ENCODE measurements at regions of chr6 and their contacts with region 1.

Region 1: GRCh38 chr6:154768280-154768679 is 35.1 kb downstream of the SCAF8 start:
- DNase-seq: no peak
- CTCF ChIP-seq: no peak

Region 2: DNA sequence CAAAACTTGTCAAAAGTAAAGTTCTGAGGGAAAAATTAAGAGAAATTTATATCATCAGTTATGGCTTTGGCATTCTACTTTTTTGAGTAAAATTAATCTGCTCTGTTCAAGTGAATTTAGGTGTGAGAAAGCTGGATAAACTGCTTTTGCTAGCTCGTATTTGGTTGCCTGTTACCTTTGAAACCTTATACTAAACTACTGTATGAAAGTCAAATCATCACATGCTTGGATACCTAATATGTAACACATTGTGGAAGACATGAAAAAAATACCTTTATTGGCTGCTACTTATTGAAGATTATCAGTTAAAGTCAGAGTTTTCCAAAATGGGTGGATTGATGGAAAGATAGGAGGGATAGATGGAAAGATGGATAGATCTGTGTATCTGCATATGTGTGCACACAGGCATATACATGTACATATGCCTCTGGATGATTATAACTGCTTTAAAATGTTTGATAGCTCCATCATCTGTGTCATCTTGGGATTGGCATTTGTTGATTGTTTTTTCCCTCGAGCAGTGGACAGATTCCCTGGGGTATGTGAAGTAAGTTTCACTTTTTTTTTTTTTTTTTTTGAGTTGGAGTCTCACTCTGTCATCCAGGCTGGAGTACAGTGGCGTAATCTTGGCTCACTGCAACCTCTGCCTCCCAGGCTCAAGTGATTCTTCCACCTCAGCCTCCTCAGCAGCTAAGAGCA is 10.8 kb before region 1 on chr6:
- CTCF ChIA-PET with region 1: interaction called, 11 read pairs
- POLR2A ChIA-PET with region 1: no interaction called
- DNase-seq: no peak
- CTCF ChIP-seq: no peak

Region 3: DNA sequence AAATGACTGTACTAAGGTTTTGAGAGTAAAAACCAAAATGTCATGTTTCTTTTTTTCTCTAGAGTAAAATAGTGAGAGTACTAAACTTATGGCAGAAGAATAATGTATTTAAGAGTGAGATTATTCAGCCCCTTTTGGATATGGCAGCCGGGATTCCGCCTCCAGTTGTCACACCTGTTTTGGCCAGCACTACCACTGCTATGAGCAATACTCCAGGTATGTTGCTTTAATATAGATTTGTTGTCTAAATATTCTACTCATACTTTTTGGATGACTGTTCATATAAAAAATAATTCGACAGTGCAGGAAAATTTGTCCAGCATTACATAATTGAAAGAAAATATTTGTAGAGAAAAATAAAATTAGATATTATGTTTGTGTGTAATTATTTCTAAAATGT is 24.5 kb after region 1 on chr6:
- CTCF ChIA-PET with region 1: no interaction called
- POLR2A ChIA-PET with region 1: no interaction called
- DNase-seq: no peak
- CTCF ChIP-seq: no peak

Measured in GM10248 (cell line).